Gastrocnemius medialis (tissue), 4 donors: ENCODE measurements at regions of chrX and their contacts with region 1.

Region 1: GRCh38 chrX:24838629-24839028 is 144.9 kb downstream of the POLA1 start:
- DNase-seq: no peak
- ATAC-seq: peak in 1 of 2 donors; percentile 65
- H3K4me3 ChIP-seq: no peak overlapping the region
- H3K27ac ChIP-seq: peak overlapping the region in 3 of 4 donors; percentile 41 to 54 (median 53)
- H3K4me1 ChIP-seq: peaks cover 12 to 13% of the 10 kb centered on the region in 2 donors
- H3K27me3 ChIP-seq: no peaks in the 10 kb centered on the region
- CTCF ChIP-seq: peak; percentile 25 to 59 (median 34)
- POLR2A ChIP-seq: no peak

Region 2: GRCh38 chrX:24676403-24677024 is 162.1 kb before region 1 on chrX:
- in situ Hi-C with region 1: no loop called
- intact Hi-C with region 1: no loop called
- DNase-seq: no peak
- ATAC-seq: no peak
- H3K4me3 ChIP-seq: no peak overlapping the region
- H3K27ac ChIP-seq: no peak overlapping the region
- H3K4me1 ChIP-seq: no peaks in the 10 kb centered on the region
- H3K27me3 ChIP-seq: no peaks in the 10 kb centered on the region
- CTCF ChIP-seq: peak in 2 of 5 experiments; percentile 37 to 49
- POLR2A ChIP-seq: no peak

Region 3: GRCh38 chrX:24720036-24720435 is 118.6 kb before region 1 on chrX:
- in situ Hi-C with region 1: no loop called
- intact Hi-C with region 1: no loop called
- DNase-seq: no peak
- ATAC-seq: no peak
- H3K4me3 ChIP-seq: no peak overlapping the region
- H3K27ac ChIP-seq: no peak overlapping the region
- H3K4me1 ChIP-seq: no peaks in the 10 kb centered on the region
- H3K27me3 ChIP-seq: no peaks in the 10 kb centered on the region
- CTCF ChIP-seq: no peak
- POLR2A ChIP-seq: no peak

Region 4: GRCh38 chrX:24956828-24957227 is 118.2 kb after region 1 on chrX:
- in situ Hi-C with region 1: no loop called
- intact Hi-C with region 1: no loop called
- DNase-seq: peak in 1 of 2 donors; percentile 12
- ATAC-seq: peak; percentile 27 to 45
- H3K4me3 ChIP-seq: no peak overlapping the region
- H3K27ac ChIP-seq: no peak overlapping the region
- H3K4me1 ChIP-seq: no peaks in the 10 kb centered on the region
- H3K27me3 ChIP-seq: no peaks in the 10 kb centered on the region
- CTCF ChIP-seq: no peak
- POLR2A ChIP-seq: no peak

Region 5: GRCh38 chrX:25020905-25021449 is 182.3 kb after region 1 on chrX:
- in situ Hi-C with region 1: loop called in 2 of 4 experiments (anchors 25 kb)
- intact Hi-C with region 1: loop called (anchors 2 kb)
- DNase-seq: no peak
- ATAC-seq: peak in 1 of 2 donors; percentile 45
- H3K4me3 ChIP-seq: peak overlapping the region in 2 of 4 donors; percentile 29 to 38
- H3K27ac ChIP-seq: no peak overlapping the region
- H3K4me1 ChIP-seq: peaks cover 6 to 12% of the 10 kb centered on the region in 2 donors
- H3K27me3 ChIP-seq: peaks cover 57 to 70% (median 67%) of the 10 kb centered on the region in 3 donors
- CTCF ChIP-seq: peak in 4 of 5 experiments; percentile 39 to 73 (median 54)
- POLR2A ChIP-seq: no peak